ENCODE measurements at regions of chr20 and their contacts with region 1.

Region 1: GRCh38 chr20:36578356-36579041 is 5.1 kb downstream of the TGIF2 start:
- DNase-seq: no peak
- ATAC-seq: no peak
- H3K4me3 Mint-ChIP-seq: no peak overlapping the region
- H3K27ac Mint-ChIP-seq: no peak overlapping the region
- H3K4me1 Mint-ChIP-seq: peaks cover 35% of the 10 kb centered on the region
- H3K27me3 Mint-ChIP-seq: no peaks in the 10 kb centered on the region

Region 2: GRCh38 chr20:36591854-36592641 is 13.5 kb after region 1 on chr20:
- CTCF ChIA-PET with region 1: interaction called, 18 read pairs
- POLR2A ChIA-PET with region 1: interaction called, 7 read pairs
- intact Hi-C with region 1: loop called (anchors 1 to 2 kb)
- DNase-seq: peak; percentile 76
- ATAC-seq: peak; percentile 50
- H3K4me3 Mint-ChIP-seq: peak overlapping the region; percentile 4
- H3K27ac Mint-ChIP-seq: peak overlapping the region; percentile 69
- H3K4me1 Mint-ChIP-seq: peaks cover 57% of the 10 kb centered on the region
- H3K27me3 Mint-ChIP-seq: no peaks in the 10 kb centered on the region

Region 3: GRCh38 chr20:36792422-36792821 is 213.9 kb after region 1 on chr20:
- CTCF ChIA-PET with region 1: no interaction called
- POLR2A ChIA-PET with region 1: no interaction called
- intact Hi-C with region 1: no loop called
- DNase-seq: peak; percentile 35
- ATAC-seq: no peak
- H3K4me3 Mint-ChIP-seq: no peak overlapping the region
- H3K27ac Mint-ChIP-seq: no peak overlapping the region
- H3K4me1 Mint-ChIP-seq: no peaks in the 10 kb centered on the region
- H3K27me3 Mint-ChIP-seq: no peaks in the 10 kb centered on the region

Region 4: GRCh38 chr20:37020636-37021035 is 442.1 kb after region 1 on chr20:
- CTCF ChIA-PET with region 1: no interaction called
- POLR2A ChIA-PET with region 1: no interaction called
- intact Hi-C with region 1: no loop called
- DNase-seq: no peak
- ATAC-seq: no peak
- H3K4me3 Mint-ChIP-seq: no peak overlapping the region
- H3K27ac Mint-ChIP-seq: no peak overlapping the region
- H3K4me1 Mint-ChIP-seq: peaks cover 23% of the 10 kb centered on the region
- H3K27me3 Mint-ChIP-seq: no peaks in the 10 kb centered on the region

Region 5: GRCh38 chr20:37579106-37579505 is 1000.6 kb after region 1 on chr20:
- CTCF ChIA-PET with region 1: no interaction called
- POLR2A ChIA-PET with region 1: no interaction called
- intact Hi-C with region 1: no loop called
- DNase-seq: no peak
- ATAC-seq: no peak
- H3K4me3 Mint-ChIP-seq: no peak overlapping the region
- H3K27ac Mint-ChIP-seq: no peak overlapping the region
- H3K4me1 Mint-ChIP-seq: no peaks in the 10 kb centered on the region
- H3K27me3 Mint-ChIP-seq: peaks cover 29% of the 10 kb centered on the region